ENCODE measurements at regions of chr17 and their contacts with region 1.

Region 1: DNA sequence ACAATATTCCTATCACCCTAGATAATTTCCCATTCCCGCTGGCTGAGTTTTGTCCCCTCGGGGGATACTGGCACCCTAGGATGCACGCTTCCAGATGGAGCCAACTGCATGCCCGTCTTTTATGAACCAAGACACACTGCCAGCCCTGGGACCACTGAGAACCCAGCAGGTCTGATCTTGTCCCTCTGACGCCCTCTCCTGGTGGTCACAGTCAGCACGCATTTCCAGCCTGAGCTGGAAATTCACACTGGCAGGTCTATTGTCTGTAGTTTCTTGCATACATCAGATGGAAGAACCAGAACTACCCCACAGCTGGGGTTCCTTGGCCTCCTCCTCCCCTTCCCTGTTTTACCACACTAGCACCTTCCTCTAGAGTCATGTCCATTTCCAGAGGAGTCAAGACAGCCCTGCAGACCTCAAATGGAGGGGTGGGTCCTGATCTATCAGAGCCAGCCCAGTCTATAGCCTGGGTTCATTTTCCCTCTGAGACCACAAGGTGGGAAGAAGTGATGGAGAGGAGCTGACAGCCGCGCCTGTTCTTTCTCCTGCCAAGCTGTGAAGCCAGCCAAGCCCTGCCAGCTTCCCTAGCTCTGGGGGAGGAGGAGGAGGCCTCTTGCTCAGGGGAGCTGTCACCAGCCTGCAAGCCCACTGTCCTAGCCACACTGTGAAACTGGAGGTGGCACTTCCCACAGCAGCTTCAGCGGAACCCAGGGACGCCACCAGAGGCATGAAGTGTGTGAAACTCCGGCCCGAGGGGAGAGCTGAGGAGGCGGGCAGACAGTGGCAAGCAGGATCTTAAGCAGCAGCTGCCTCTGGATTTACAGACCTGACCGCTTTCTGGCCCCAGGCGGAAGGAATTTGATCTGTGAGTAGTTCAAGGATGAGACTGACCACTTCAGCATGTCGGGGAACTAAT is 29.3 kb downstream of the MXRA7 start:
- DNase-seq: peak; percentile 55 to 86 (median 79)
- ATAC-seq: peak; percentile 78
- H3K4me3 ChIP-seq: no peak overlapping the region
- H3K4me3 Mint-ChIP-seq: no peak overlapping the region
- H3K27ac ChIP-seq: peak overlapping the region in 1 of 2 experiments; percentile 39
- H3K27ac Mint-ChIP-seq: no peak overlapping the region
- H3K4me1 ChIP-seq: peaks cover 29% of the 10 kb centered on the region
- H3K4me1 Mint-ChIP-seq: peaks cover 11% of the 10 kb centered on the region
- H3K27me3 ChIP-seq: no peaks in the 10 kb centered on the region
- H3K27me3 Mint-ChIP-seq: no peaks in the 10 kb centered on the region
- CTCF ChIP-seq: peak; percentile 77

Region 2: DNA sequence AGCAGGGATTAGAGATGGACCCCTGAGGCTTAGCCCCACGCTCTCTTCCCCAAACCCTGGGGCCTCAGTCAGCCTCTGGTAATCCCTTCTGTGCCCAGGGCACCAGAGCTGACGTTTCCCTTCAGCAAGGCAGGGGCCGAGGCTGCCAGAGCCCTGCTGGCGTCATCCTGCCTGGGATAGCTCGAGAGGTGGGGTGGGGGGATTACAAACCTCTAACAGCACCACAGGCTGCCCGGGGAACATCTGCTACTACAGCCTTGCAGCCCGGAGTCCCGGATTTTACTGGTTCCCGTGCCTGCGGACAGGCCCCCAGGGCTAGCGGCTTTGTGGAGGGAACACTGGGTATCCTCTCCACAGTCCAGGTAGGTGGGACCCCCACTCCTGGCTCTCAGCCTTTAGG is 214.1 kb before region 1 on chr17 and contains the start of gene AANAT:
- CTCF ChIA-PET with region 1: interaction called, 5 read pairs
- POLR2A ChIA-PET with region 1: no interaction called
- intact Hi-C with region 1: loop called in 1 of 2 experiments (anchors 1 kb)
- DNase-seq: no peak
- ATAC-seq: no peak
- H3K4me3 ChIP-seq: no peak within 1 kb of the TSS
- H3K4me3 Mint-ChIP-seq: no peak within 1 kb of the TSS
- H3K27ac ChIP-seq: no peak within 1 kb of the TSS
- H3K27ac Mint-ChIP-seq: no peak within 1 kb of the TSS
- H3K4me1 ChIP-seq: peaks cover 3% of the 10 kb centered on the region
- H3K4me1 Mint-ChIP-seq: peaks cover 4% of the 10 kb centered on the region
- H3K27me3 ChIP-seq: no peaks in the 10 kb centered on the region
- H3K27me3 Mint-ChIP-seq: no peaks in the 10 kb centered on the region
- CTCF ChIP-seq: no peak
- total RNA-seq, gene AANAT: not detected

Region 3: DNA sequence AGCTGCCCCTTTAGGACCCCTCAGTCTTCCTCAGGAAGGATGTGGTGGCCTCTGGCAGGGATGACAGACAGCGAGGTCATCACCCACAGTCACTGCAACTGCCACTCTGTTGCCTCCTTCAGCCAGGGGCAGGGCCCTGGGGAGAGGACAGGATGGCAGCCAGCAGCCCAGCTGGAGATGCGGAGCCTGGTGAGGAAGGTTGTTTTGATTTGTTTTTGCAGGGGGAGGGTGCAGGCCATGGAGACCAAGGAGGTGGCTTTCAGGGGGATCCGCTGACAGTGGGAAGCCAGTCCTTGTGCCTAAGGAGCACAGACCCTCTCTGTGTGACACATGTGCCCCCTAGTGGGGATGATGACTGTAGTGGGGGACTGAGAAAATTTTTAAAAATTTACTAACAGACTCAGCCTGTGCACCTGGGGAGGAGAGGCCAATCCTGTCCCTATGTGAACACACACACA is 134.3 kb before region 1 on chr17:
- CTCF ChIA-PET with region 1: interaction called, 17 read pairs
- POLR2A ChIA-PET with region 1: no interaction called
- intact Hi-C with region 1: no loop called
- DNase-seq: peak; percentile 30 to 83 (median 72)
- ATAC-seq: peak; percentile 94
- H3K4me3 ChIP-seq: no peak overlapping the region
- H3K4me3 Mint-ChIP-seq: no peak overlapping the region
- H3K27ac ChIP-seq: no peak overlapping the region
- H3K27ac Mint-ChIP-seq: no peak overlapping the region
- H3K4me1 ChIP-seq: peaks cover 7% of the 10 kb centered on the region
- H3K4me1 Mint-ChIP-seq: peaks cover 11% of the 10 kb centered on the region
- H3K27me3 ChIP-seq: no peaks in the 10 kb centered on the region
- H3K27me3 Mint-ChIP-seq: peaks cover 8% of the 10 kb centered on the region
- CTCF ChIP-seq: peak; percentile 62

Region 4: GRCh38 chr17:76557368-76558197 is 123.9 kb before region 1 on chr17:
- CTCF ChIA-PET with region 1: interaction called, 36 read pairs
- POLR2A ChIA-PET with region 1: interaction called, 4 read pairs
- intact Hi-C with region 1: loop called (anchors 1 kb)
- DNase-seq: peak; percentile 86 to 97 (median 92)
- ATAC-seq: peak; percentile 78
- H3K4me3 ChIP-seq: peak overlapping the region; percentile 70 to 75
- H3K4me3 Mint-ChIP-seq: peak overlapping the region; percentile 95
- H3K27ac ChIP-seq: peak overlapping the region; percentile 81 to 95
- H3K27ac Mint-ChIP-seq: peak overlapping the region; percentile 97
- H3K4me1 ChIP-seq: peaks cover 49% of the 10 kb centered on the region
- H3K4me1 Mint-ChIP-seq: peaks cover 63% of the 10 kb centered on the region
- H3K27me3 ChIP-seq: no peaks in the 10 kb centered on the region
- H3K27me3 Mint-ChIP-seq: no peaks in the 10 kb centered on the region
- CTCF ChIP-seq: peak; percentile 35

Region 5: DNA sequence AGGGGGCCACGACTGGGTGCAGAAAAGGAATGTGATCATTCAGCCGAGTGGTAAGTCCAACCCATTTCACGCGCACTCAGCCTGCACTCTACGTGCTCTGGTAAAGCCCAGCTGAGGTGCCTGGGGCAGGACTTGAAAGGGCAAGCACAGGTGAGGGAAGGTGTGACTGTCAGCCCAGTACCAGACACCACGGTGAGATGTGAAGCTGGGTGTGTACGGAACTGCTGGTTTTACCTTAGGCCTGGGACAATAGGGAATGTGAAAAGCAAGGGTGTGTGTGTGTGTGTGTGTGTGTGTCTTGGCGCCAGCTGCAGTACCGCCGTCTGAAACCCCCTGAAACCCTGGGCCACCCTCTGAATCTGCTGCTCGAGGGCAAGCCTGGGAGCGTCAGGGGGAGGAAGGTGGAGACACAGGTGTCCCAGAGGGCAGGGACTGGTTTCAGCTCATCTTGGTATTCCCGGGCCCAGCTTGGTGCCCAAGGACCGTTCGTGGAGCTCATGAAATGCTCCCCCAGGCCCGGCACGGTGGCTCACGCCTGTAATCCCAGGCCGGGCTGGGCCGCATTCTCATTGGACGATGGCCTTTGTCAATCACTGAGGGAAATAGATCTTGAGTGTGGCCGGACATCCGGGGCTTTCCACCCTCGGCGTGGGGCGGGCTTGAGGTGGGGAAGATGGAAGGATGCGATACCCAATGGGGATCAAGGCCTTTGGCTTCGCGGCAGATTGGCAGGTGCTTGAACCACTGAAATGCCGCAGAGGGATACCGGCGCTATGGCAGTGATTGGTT is 10.2 kb before region 1 on chr17:
- CTCF ChIA-PET with region 1: interaction called, 30 read pairs
- POLR2A ChIA-PET with region 1: interaction called, 15 read pairs
- intact Hi-C with region 1: no loop called
- DNase-seq: peak; percentile 96 to 100 (median 99)
- ATAC-seq: peak; percentile 97
- H3K4me3 ChIP-seq: peak overlapping the region; percentile 76 to 79
- H3K4me3 Mint-ChIP-seq: peak overlapping the region; percentile 90
- H3K27ac ChIP-seq: peak overlapping the region; percentile 71 to 90
- H3K27ac Mint-ChIP-seq: peak overlapping the region; percentile 96
- H3K4me1 ChIP-seq: peaks cover 39% of the 10 kb centered on the region
- H3K4me1 Mint-ChIP-seq: peaks cover 49% of the 10 kb centered on the region
- H3K27me3 ChIP-seq: no peaks in the 10 kb centered on the region
- H3K27me3 Mint-ChIP-seq: no peaks in the 10 kb centered on the region
- CTCF ChIP-seq: no peak

Region 6: GRCh38 chr17:76700617-76701470 is 19.4 kb after region 1 on chr17:
- CTCF ChIA-PET with region 1: interaction called, 11 read pairs
- POLR2A ChIA-PET with region 1: no interaction called
- intact Hi-C with region 1: no loop called
- DNase-seq: peak in 3 of 9 experiments; percentile 36 to 73 (median 67)
- ATAC-seq: peak; percentile 72
- H3K4me3 ChIP-seq: no peak overlapping the region
- H3K4me3 Mint-ChIP-seq: no peak overlapping the region
- H3K27ac ChIP-seq: peak overlapping the region in 1 of 2 experiments; percentile 50
- H3K27ac Mint-ChIP-seq: peak overlapping the region; percentile 79
- H3K4me1 ChIP-seq: no peaks in the 10 kb centered on the region
- H3K4me1 Mint-ChIP-seq: peaks cover 9% of the 10 kb centered on the region
- H3K27me3 ChIP-seq: no peaks in the 10 kb centered on the region
- H3K27me3 Mint-ChIP-seq: no peaks in the 10 kb centered on the region
- CTCF ChIP-seq: no peak

Region 7: DNA sequence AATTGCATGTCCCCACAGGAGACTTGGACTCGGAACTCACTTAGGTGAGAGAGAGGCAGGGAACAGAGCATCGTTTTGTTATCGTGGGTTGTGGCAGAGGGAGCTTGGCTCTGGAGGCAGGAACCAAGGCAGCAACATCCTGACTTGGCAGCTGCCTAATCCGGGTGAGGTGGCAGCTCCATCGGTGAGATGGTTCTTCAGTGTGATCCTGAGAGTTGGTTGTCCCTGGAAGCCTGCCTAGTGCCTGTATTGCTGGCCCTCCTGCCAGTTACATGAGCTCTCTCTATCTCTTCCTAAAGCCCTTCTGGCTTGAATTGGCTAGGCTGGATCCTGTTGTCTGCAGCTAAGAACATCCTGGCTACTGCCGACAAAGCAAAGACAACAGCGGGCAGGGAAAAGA is 439.4 kb after region 1 on chr17:
- CTCF ChIA-PET with region 1: no interaction called
- POLR2A ChIA-PET with region 1: no interaction called
- intact Hi-C with region 1: no loop called
- DNase-seq: no peak
- ATAC-seq: no peak
- H3K4me3 ChIP-seq: no peak overlapping the region
- H3K4me3 Mint-ChIP-seq: no peak overlapping the region
- H3K27ac ChIP-seq: no peak overlapping the region
- H3K27ac Mint-ChIP-seq: no peak overlapping the region
- H3K4me1 ChIP-seq: no peaks in the 10 kb centered on the region
- H3K4me1 Mint-ChIP-seq: no peaks in the 10 kb centered on the region
- H3K27me3 ChIP-seq: no peaks in the 10 kb centered on the region
- H3K27me3 Mint-ChIP-seq: no peaks in the 10 kb centered on the region
- CTCF ChIP-seq: no peak

Measured in CD8-positive, alpha-beta T cell (primary cell).